ENCODE measurements at regions of chr20 and their contacts with region 1.

Region 1: GRCh38 chr20:9978397-9979004 is 56.3 kb upstream of the ANKEF1 start:
- DNase-seq: peak; percentile 35 to 74
- H3K4me3 ChIP-seq: peak overlapping the region; percentile 19; the same call in 1 of the 2 replicates
- H3K27ac ChIP-seq: no peak overlapping the region
- H3K4me1 ChIP-seq: peaks cover 11% of the 10 kb centered on the region; the same call in 1 of the 2 replicates
- H3K27me3 ChIP-seq: no peaks in the 10 kb centered on the region
- CTCF ChIP-seq: peak; percentile 81

Region 2: DNA sequence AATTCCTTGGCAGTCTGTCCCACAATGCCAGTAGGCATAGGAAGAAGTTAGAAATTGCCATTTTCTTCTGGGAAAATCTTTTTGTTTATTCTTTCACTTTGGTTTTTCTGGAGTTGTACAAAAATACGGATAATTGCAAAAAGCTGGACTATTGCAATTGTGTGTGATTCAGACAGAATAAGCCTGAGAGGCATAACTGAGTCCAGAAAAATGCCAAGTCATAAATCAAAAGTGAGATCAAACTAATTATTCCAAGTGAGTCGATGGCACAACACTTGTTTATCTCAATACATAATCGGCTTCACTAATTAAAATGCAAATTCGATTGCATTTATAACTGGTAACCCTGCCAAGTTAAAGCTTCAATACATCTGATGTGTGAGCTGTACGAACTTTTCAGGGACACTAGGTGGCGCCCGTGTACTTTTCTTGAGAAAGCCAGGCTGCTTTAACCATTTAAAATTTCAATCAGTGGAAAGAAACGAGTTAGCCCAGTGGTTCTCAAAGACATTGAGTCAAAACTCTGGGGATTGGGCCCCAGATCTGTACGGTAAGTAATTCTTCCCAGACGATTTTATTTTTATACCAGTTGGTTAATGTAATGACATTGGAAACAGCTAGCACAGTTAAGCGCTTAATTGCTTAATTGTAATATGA is 361.5 kb before region 1 on chr20:
- CTCF ChIA-PET with region 1: no interaction called
- POLR2A ChIA-PET with region 1: no interaction called
- intact Hi-C with region 1: loop called (anchors 5 kb)
- DNase-seq: peak; percentile 31 to 42
- H3K4me3 ChIP-seq: no peak overlapping the region; the same call in 1 of the 2 replicates
- H3K27ac ChIP-seq: no peak overlapping the region
- H3K4me1 ChIP-seq: no peaks in the 10 kb centered on the region
- H3K27me3 ChIP-seq: no peaks in the 10 kb centered on the region; the same call in 1 of the 2 replicates
- CTCF ChIP-seq: peak; percentile 90

Region 3: DNA sequence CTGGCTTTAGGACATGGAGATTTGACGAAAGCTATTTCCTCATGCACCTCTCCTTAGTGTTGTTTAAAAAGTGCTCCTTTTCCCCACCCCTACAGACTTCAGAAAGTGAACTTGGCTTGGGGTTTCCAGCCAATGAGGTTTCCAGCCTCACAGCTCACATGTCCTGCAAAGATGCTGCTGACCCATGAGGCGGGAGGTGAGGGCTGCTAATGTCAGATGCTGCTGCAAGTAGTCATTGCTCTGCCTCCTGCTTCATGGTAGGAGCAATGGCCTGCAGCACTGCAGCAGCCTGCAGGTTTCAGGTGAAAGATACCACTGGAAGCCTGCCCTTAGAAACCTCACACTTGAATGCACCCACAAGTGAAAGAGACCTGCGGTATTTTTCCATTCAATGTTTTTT is 351.3 kb before region 1 on chr20:
- CTCF ChIA-PET with region 1: no interaction called
- POLR2A ChIA-PET with region 1: no interaction called
- intact Hi-C with region 1: no loop called
- DNase-seq: no peak
- H3K4me3 ChIP-seq: no peak overlapping the region
- H3K27ac ChIP-seq: no peak overlapping the region
- H3K4me1 ChIP-seq: no peaks in the 10 kb centered on the region
- H3K27me3 ChIP-seq: 0 out of 2 replicates have a peak, but pooled peaks cover 15% of the 10 kb centered on the region
- CTCF ChIP-seq: no peak

Region 4: DNA sequence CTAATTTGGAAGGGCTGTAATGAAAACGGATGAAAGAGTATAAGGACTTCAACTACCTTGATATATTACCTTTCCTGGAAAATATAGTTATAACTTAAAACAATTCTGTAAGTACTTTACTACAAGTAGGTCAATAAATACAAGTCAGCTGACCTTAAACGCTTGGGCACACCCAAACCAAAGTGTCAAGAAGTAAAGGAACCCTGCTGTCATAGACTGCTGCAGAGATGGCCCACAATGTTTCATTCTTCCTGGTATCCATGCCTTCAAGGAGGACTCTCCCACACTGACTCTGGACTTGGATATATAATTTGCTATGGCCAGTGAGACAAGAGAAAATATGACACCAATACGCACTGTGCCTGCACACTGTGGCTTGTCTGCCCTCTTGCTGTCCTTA is 332.1 kb before region 1 on chr20:
- CTCF ChIA-PET with region 1: no interaction called
- POLR2A ChIA-PET with region 1: no interaction called
- intact Hi-C with region 1: no loop called
- DNase-seq: no peak
- H3K4me3 ChIP-seq: no peak overlapping the region
- H3K27ac ChIP-seq: no peak overlapping the region
- H3K4me1 ChIP-seq: no peaks in the 10 kb centered on the region
- H3K27me3 ChIP-seq: no peaks in the 10 kb centered on the region; the same call in 1 of the 2 replicates
- CTCF ChIP-seq: no peak

Region 5: GRCh38 chr20:9710685-9711084 is 267.8 kb before region 1 on chr20:
- CTCF ChIA-PET with region 1: no interaction called
- POLR2A ChIA-PET with region 1: no interaction called
- intact Hi-C with region 1: no loop called
- DNase-seq: no peak
- H3K4me3 ChIP-seq: no peak overlapping the region
- H3K27ac ChIP-seq: no peak overlapping the region
- H3K4me1 ChIP-seq: no peaks in the 10 kb centered on the region
- H3K27me3 ChIP-seq: no peaks in the 10 kb centered on the region
- CTCF ChIP-seq: no peak

Region 6: GRCh38 chr20:10427060-10427692 is 448.7 kb after region 1 on chr20:
- CTCF ChIA-PET with region 1: interaction called, 5 read pairs
- POLR2A ChIA-PET with region 1: no interaction called
- intact Hi-C with region 1: loop called (anchors 1 kb)
- DNase-seq: peak; percentile 33 to 56
- H3K4me3 ChIP-seq: no peak overlapping the region
- H3K27ac ChIP-seq: no peak overlapping the region
- H3K4me1 ChIP-seq: no peaks in the 10 kb centered on the region
- H3K27me3 ChIP-seq: no peaks in the 10 kb centered on the region
- CTCF ChIP-seq: peak; percentile 85

Region 7: DNA sequence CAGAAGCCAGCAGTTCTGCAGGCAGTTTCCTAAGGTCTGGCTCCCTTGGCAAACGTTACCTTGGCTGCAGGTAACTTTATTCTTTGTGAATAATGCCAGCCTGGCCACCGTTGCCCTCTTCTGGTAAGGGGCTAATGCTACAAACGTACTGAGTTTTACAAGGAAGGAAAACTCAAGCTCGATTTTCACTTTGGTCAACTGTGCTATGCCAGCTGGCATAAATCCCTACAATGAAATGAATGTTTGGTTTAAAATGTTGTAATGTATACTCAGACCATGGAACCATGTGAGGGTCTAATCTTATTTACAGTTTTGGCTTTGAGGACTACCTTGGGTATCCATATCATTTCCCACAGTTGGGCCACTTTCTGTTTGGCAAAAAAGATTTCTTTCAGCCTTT is 558.0 kb after region 1 on chr20:
- CTCF ChIA-PET with region 1: no interaction called
- POLR2A ChIA-PET with region 1: interaction called, 7 read pairs
- intact Hi-C with region 1: loop called (anchors 5 kb)
- DNase-seq: peak; percentile 30 to 45
- H3K4me3 ChIP-seq: no peak overlapping the region
- H3K27ac ChIP-seq: no peak overlapping the region
- H3K4me1 ChIP-seq: peaks cover 50% of the 10 kb centered on the region
- H3K27me3 ChIP-seq: no peaks in the 10 kb centered on the region
- CTCF ChIP-seq: peak; percentile 64

Region 8: GRCh38 chr20:10654630-10655029 is 676.1 kb after region 1 on chr20:
- CTCF ChIA-PET with region 1: no interaction called
- POLR2A ChIA-PET with region 1: no interaction called
- intact Hi-C with region 1: loop called (anchors 5 kb)
- DNase-seq: no peak
- H3K4me3 ChIP-seq: no peak overlapping the region
- H3K27ac ChIP-seq: no peak overlapping the region
- H3K4me1 ChIP-seq: no peaks in the 10 kb centered on the region
- H3K27me3 ChIP-seq: no peaks in the 10 kb centered on the region
- CTCF ChIP-seq: no peak

Region 9: GRCh38 chr20:11274141-11274594 is 1295.7 kb after region 1 on chr20:
- CTCF ChIA-PET with region 1: no interaction called
- POLR2A ChIA-PET with region 1: no interaction called
- intact Hi-C with region 1: loop called (anchors 1 kb)
- DNase-seq: peak; percentile 30 to 61
- H3K4me3 ChIP-seq: no peak overlapping the region
- H3K27ac ChIP-seq: no peak overlapping the region
- H3K4me1 ChIP-seq: peaks cover 3% of the 10 kb centered on the region; the same call in 1 of the 2 replicates
- H3K27me3 ChIP-seq: no peaks in the 10 kb centered on the region
- CTCF ChIP-seq: peak; percentile 76